GM10248 (cell line): ENCODE measurements at regions of chr12 and their contacts with region 1.

Region 1: DNA sequence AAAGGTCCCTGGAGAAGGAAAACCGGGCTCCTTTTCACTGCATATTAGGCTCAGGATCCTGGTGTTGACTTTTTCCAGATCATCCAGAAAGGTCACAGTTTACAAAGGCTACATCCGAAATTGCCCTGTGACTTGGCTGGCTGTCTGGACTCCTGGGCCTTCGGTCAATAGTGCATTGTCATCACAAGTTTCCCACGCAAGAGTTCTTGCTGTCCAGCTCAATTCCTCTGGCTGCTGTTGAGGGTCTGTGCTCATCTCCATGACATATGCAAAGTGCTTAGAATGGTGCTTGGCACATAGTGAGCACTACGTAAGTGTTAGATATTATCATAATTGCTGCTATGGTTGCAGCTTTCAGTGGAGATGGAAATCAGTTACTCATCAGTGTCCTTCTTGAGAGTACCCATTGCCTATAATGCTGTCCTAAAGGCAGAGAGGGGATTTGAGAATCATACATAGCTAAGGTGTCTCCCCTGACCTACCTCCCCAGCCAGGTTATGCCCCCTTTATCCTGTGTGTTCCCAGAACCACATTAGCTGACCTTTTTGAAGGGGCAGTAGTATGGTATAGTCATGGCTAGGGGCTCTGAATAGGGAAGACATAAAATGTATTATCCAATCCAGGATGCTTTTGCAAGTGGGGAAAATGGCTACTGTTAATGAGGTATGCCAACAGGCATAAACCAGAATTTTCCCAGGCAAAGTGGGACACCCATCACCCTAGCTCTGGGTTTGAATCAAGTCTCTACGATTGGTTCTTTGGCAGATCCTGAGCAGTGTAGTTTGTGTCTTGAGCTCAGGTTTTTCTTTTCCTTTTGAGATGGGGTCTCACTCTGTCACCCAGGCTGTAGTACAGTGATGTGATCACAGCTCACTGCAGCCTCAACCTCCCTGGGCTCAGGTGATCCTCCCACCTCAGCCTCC is 132.0 kb upstream of the CCND2 start:
- DNase-seq: no peak
- CTCF ChIP-seq: no peak

Region 2: DNA sequence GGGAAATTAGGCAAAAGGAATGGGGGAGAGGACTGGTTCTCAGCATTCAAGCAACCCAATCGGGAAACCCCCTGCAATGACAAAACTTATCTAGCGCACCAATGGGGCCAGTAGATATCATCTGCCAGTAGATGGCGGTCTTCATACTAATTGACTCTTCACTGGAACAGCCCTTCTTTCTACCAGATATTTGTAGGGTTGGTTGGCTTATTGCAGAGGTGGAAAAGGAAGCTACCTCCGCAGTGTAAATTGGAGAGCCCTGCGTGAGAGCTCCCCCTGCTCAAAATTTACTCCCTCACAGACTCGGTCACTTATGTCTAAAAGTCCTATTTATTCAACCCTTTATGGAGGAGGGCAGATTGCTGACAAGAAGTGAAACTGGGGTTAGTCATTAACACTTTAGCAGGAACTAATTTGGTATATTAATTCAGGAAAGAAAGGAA is 34.2 kb before region 1 on chr12:
- CTCF ChIA-PET with region 1: interaction called, 14 read pairs
- POLR2A ChIA-PET with region 1: no interaction called
- DNase-seq: peak; percentile 84
- CTCF ChIP-seq: peak; percentile 67